CD8-positive, alpha-beta memory T cell (primary cell): ENCODE measurements at regions of chr6 and their contacts with region 1.

Region 1: DNA sequence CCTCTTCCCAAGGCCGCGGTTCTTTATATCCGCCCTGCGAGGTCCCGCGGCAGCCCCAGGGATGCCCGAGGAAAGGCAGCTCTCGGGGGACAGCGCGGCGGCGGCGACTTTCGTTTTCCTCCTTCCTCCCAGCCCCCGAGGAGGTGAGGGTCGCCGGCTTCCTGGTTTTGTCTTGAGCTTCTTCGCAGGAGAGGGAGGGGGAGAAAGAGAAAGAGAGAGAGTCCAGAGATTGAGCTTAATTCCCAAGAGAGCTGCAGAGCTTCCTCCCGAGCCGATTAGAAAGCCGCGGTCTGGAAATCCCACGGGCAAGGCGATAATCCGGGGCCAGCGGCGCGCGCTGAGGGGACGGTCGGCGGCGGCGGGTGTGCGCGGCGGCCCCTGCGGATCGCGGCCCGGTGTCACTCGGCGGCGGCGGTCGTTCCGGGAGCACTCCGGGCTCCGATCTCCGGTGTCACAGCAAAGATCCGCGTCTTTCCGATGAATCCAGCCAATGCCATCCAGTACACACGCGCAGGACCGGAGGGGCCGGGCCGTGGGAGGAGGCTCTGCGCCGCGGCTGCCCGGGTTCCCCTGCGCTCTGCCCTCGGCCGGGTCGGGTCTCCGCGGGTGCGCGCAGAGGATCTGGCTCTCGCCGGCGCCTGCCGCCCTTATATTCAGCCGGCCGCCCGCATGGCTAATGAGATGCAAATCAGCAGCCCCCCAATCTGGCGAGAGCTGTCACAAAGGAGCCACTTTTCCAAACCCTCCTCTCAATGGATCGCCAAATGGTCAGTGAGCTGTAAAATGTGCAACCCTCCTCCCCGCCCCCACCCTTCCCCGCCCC is at the start of gene DLL1:
- DNase-seq: peak in 2 of 5 donors; percentile 26 to 39
- H3K4me3 ChIP-seq: peak within 1 kb of the TSS; percentile 41
- H3K4me3 Mint-ChIP-seq: peak within 1 kb of the TSS; percentile 89 to 96 (median 91)
- H3K27ac ChIP-seq: no peak within 1 kb of the TSS
- H3K27ac Mint-ChIP-seq: peak within 1 kb of the TSS in 7 of 8 donors; percentile 1 to 89 (median 81)
- H3K4me1 ChIP-seq: peaks cover 39% of the 10 kb centered on the region
- H3K4me1 Mint-ChIP-seq: peaks cover 44 to 49% (median 44%) of the 10 kb centered on the region in 3 donors
- H3K27me3 ChIP-seq: peaks cover 51% of the 10 kb centered on the region
- H3K27me3 Mint-ChIP-seq: peaks cover 50 to 55% of the 10 kb centered on the region in 2 donors
- total RNA-seq, gene DLL1: 0.79 to 0.86 TPM

Region 2: GRCh38 chr6:170271771-170272314 is 18.7 kb before region 1 on chr6:
- CTCF ChIA-PET with region 1: interaction called, 9 read pairs
- POLR2A ChIA-PET with region 1: interaction called, 10 read pairs
- DNase-seq: peak; percentile 61 to 85 (median 82)
- H3K4me3 ChIP-seq: peak overlapping the region; percentile 75
- H3K4me3 Mint-ChIP-seq: peak overlapping the region; percentile 60 to 94 (median 86)
- H3K27ac ChIP-seq: no peak overlapping the region
- H3K27ac Mint-ChIP-seq: peak overlapping the region; percentile 67 to 89 (median 75)
- H3K4me1 ChIP-seq: peaks cover 22% of the 10 kb centered on the region
- H3K4me1 Mint-ChIP-seq: peaks cover 18 to 27% (median 20%) of the 10 kb centered on the region in 3 donors
- H3K27me3 ChIP-seq: peaks cover 8% of the 10 kb centered on the region
- H3K27me3 Mint-ChIP-seq: peaks cover 5 to 20% of the 10 kb centered on the region in 2 donors